ENCODE measurements at regions of chr6 and their contacts with region 1.

Region 1: DNA sequence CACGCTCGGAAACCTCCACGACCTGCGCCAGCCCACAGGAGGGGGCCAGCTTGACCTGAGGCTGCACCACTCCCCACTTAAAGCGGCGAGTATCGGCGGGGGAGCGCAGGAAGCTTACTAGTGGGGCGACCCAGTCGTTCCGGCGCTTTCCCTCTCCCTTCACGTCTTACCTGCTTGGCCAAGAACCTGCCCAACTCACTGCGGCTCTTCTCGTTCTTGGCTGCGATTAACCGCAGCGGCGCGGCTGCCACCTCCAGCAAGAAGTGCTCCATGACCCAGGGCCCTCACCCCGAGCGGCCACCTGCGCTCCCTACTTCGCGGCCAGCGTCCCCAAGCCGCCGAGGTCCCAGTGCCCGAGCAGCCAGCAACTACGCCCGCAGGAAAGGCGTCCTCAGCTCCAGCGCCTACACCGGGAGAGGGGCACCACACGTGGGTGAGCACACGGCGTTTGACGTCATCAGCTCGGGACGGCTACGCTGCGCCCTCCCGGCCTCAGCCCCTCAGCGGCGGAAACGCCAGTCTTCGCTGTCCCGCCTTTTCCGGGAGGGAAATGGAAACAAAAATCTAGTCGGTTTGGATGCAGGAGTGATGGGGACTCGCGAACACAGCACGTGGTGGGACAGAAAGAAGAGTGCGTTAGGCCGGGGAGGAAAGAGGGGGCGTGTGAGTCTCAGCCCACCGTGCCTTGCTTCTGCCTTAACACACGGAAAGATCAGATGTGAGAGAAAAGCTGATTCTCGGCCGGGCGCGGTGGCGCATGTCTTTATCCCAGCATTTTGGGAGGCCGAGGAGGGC is at the start of gene MDN1:
- DNase-seq: peak; percentile 96
- H3K4me3 ChIP-seq: peak within 1 kb of the TSS; percentile 81 to 99 (median 93)
- H3K27ac ChIP-seq: peak within 1 kb of the TSS; percentile 58 to 81
- H3K4me1 ChIP-seq: peaks cover 7 to 23% (median 14%) of the 10 kb centered on the region in 4 experiments
- H3K27me3 ChIP-seq: no peaks in the 10 kb centered on the region

Region 2: GRCh38 chr6:89454301-89454700 is 365.2 kb before region 1 on chr6:
- CTCF ChIA-PET with region 1: no interaction called
- POLR2A ChIA-PET with region 1: no interaction called
- DNase-seq: no peak
- H3K4me3 ChIP-seq: no peak overlapping the region
- H3K27ac ChIP-seq: no peak overlapping the region
- H3K4me1 ChIP-seq: no peaks in the 10 kb centered on the region
- H3K27me3 ChIP-seq: no peaks in the 10 kb centered on the region

Region 3: GRCh38 chr6:89807581-89807980 is 12.0 kb before region 1 on chr6:
- CTCF ChIA-PET with region 1: interaction called, 16 read pairs
- POLR2A ChIA-PET with region 1: interaction called, 3 read pairs
- DNase-seq: no peak
- H3K4me3 ChIP-seq: no peak overlapping the region
- H3K27ac ChIP-seq: no peak overlapping the region
- H3K4me1 ChIP-seq: no peaks in the 10 kb centered on the region
- H3K27me3 ChIP-seq: no peaks in the 10 kb centered on the region

Region 4: GRCh38 chr6:89829591-89830385 is 10.3 kb after region 1 on chr6 and contains the start of gene CASP8AP2:
- CTCF ChIA-PET with region 1: interaction called, 14 read pairs
- POLR2A ChIA-PET with region 1: interaction called, 5 read pairs
- DNase-seq: peak; percentile 100
- H3K4me3 ChIP-seq: peak within 1 kb of the TSS; percentile 86 to 99 (median 96)
- H3K27ac ChIP-seq: peak within 1 kb of the TSS; percentile 79 to 89
- H3K4me1 ChIP-seq: peaks cover 7 to 21% (median 9%) of the 10 kb centered on the region in 4 experiments
- H3K27me3 ChIP-seq: no peaks in the 10 kb centered on the region

Measured in common myeloid progenitor, CD34-positive (primary cell).